Body of pancreas (tissue), 4 donors: ENCODE measurements at regions of chr6 and their contacts with region 1.

Region 1: DNA sequence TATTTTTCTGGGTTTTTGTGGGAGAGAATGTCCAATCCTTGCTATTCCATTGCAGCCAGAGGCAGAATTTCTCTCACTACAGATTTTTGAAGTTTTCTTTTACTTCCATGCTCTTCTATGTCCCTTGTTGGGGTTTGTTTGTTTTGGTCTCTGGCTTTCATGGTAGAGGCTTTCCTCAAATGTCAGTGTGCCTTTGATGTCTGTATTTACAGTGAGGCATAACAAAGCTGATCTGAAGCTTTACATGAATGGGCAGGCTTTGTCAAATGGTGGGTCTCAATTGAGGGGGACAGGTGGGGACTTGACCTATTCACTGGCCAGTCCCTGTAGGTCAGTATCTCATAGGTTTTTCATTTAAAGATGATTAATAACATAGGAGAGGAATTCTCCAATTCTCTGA is 8.6 kb upstream of the CARMIL1 start:
- DNase-seq: no peak
- ATAC-seq: no peak
- H3K4me3 ChIP-seq: no peak overlapping the region
- H3K27ac ChIP-seq: no peak overlapping the region
- H3K4me1 ChIP-seq: no peaks in the 10 kb centered on the region
- H3K27me3 ChIP-seq: no peaks in the 10 kb centered on the region
- CTCF ChIP-seq: no peak
- POLR2A ChIP-seq: no peak

Region 2: DNA sequence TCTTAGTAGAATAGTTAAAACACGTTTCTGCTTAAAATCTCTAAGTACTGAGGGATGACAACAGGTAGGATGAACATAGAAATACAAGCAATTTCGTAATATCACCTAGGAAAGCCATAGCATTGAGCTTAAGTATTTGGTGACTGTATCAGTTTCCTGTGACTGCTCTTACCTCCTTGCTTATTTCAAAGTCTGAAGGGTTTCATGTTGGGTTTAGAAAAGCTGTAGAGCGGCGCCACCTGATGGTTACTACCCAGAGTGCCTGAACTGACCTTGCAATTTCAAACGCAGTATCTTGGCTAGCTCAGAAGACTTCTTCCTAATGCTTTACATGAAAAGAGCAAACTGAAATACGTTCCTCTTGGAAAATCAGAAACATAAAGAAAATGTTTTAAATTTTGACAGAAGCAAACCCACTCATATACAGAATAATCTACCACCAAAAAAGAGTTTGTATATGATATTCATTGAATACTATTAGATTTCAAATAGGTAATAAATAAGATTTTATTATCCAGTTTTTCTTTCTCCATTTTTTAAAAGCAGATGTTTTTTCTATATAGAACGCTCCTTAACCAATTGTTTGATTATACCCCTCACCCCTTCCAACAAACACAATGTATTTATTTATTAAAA is 252.5 kb before region 1 on chr6:
- intact Hi-C with region 1: no loop called
- DNase-seq: peak; percentile 52 to 71 (median 58)
- ATAC-seq: peak; percentile 35
- H3K4me3 ChIP-seq: no peak overlapping the region
- H3K27ac ChIP-seq: no peak overlapping the region
- H3K4me1 ChIP-seq: peaks cover 5% of the 10 kb centered on the region
- H3K27me3 ChIP-seq: no peaks in the 10 kb centered on the region
- CTCF ChIP-seq: peak in 6 of 7 experiments; percentile 22 to 55 (median 49)
- POLR2A ChIP-seq: no peak

Region 3: GRCh38 chr6:25490018-25490801 is 219.7 kb after region 1 on chr6:
- intact Hi-C with region 1: loop called (anchors 5 kb)
- DNase-seq: peak; percentile 81 to 88 (median 86)
- ATAC-seq: peak; percentile 97
- H3K4me3 ChIP-seq: no peak overlapping the region
- H3K27ac ChIP-seq: peak overlapping the region in 1 of 4 donors; percentile 5
- H3K4me1 ChIP-seq: peaks cover 19% of the 10 kb centered on the region
- H3K27me3 ChIP-seq: no peaks in the 10 kb centered on the region
- CTCF ChIP-seq: peak; percentile 64 to 93 (median 90)
- POLR2A ChIP-seq: no peak

Region 4: GRCh38 chr6:25537349-25538018 is 266.9 kb after region 1 on chr6:
- intact Hi-C with region 1: no loop called
- DNase-seq: no peak
- ATAC-seq: no peak
- H3K4me3 ChIP-seq: no peak overlapping the region
- H3K27ac ChIP-seq: no peak overlapping the region
- H3K4me1 ChIP-seq: no peaks in the 10 kb centered on the region
- H3K27me3 ChIP-seq: no peaks in the 10 kb centered on the region
- CTCF ChIP-seq: no peak
- POLR2A ChIP-seq: no peak